Breast epithelium (tissue), 4 donors: ENCODE measurements at regions of chr4 and their contacts with region 1.

Region 1: GRCh38 chr4:118046323-118046722 is 12.0 kb downstream of the NDST3 start:
- DNase-seq: no peak
- H3K4me3 ChIP-seq: no peak overlapping the region
- H3K27ac ChIP-seq: no peak overlapping the region
- H3K4me1 ChIP-seq: no peaks in the 10 kb centered on the region
- H3K27me3 ChIP-seq: peaks cover 0 to 3% of the 10 kb centered on the region in 2 donors
- CTCF ChIP-seq: no peak
- POLR2A ChIP-seq: no peak

Region 2: DNA sequence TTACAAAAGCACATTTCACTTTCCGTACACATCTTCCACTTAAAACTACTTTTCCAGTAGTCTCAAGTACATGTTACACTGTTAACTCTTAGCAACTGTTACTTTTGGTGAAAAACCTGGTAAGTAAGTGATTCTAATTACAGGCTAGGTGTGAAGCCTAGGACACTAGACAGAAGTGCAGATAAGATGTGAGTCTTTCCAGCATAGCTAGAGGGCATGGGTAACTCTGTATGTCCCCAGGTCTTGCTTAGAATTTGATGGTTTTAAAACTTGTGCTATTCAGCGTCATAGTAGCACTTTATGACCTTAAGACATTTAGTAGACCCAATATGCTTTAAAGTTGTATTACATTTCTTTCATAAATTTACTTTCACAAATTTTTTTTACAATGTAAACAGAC is 1531.4 kb before region 1 on chr4:
- intact Hi-C with region 1: loop called (anchors 5 kb)
- DNase-seq: no peak
- H3K4me3 ChIP-seq: no peak overlapping the region
- H3K27ac ChIP-seq: no peak overlapping the region
- H3K4me1 ChIP-seq: no peaks in the 10 kb centered on the region
- H3K27me3 ChIP-seq: no peaks in the 10 kb centered on the region
- CTCF ChIP-seq: no peak
- POLR2A ChIP-seq: no peak

Region 3: GRCh38 chr4:118029224-118029623 is 17.1 kb before region 1 on chr4:
- intact Hi-C with region 1: no loop called
- DNase-seq: no peak
- H3K4me3 ChIP-seq: no peak overlapping the region
- H3K27ac ChIP-seq: no peak overlapping the region
- H3K4me1 ChIP-seq: no peaks in the 10 kb centered on the region
- H3K27me3 ChIP-seq: peaks cover 0 to 8% of the 10 kb centered on the region in 2 donors
- CTCF ChIP-seq: no peak
- POLR2A ChIP-seq: no peak